ENCODE measurements at regions of chr6 and their contacts with region 1.

Region 1: GRCh38 chr6:38045701-38046305 is 226.3 kb downstream of the ZFAND3 start:
- DNase-seq: no peak
- ATAC-seq: no peak
- H3K4me3 ChIP-seq: no peak overlapping the region
- H3K4me3 Mint-ChIP-seq: no peak overlapping the region
- H3K27ac ChIP-seq: no peak overlapping the region
- H3K27ac Mint-ChIP-seq: no peak overlapping the region
- H3K4me1 ChIP-seq: no peaks in the 10 kb centered on the region
- H3K4me1 Mint-ChIP-seq: peaks cover 22 to 32% (median 27%) of the 10 kb centered on the region in 3 donors
- H3K27me3 ChIP-seq: no peaks in the 10 kb centered on the region
- H3K27me3 Mint-ChIP-seq: no peaks in the 10 kb centered on the region

Region 2: DNA sequence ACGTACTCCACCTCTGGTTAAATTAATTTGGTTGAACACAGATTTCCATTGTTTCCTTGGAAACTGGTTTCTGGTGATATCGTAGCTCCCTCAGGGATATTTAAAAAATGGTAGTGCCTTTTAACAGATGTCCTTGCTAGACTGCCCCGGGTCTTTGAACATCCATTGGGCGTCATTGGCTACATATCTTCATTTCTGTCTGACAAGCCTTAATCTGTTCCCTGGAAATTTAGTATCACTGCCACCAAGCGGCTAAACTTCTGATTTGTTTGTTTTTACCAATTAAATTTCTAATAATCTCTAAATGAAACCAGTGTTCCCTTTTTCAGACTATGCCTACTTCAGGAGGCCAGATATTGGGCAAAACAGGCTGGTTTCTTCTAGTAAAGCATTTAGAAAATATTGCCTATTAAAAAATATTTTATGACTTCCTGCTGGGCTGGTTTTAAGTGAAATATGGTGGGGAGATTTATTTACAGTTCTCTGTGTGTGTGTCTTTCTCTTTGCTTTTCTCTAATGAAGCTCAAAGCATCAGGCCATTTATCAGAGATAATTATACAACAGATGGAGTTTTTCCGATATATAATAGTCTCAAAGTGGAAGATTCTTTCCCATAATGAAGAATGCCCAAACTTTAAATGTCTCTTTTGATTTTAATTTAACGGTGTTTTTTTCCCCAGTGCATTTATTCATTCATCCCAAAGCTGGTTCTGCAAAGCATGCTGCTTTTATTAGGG is 23.2 kb after region 1 on chr6:
- CTCF ChIA-PET with region 1: interaction called in 1 of 2 experiments, 11 read pairs
- POLR2A ChIA-PET with region 1: no interaction called
- DNase-seq: no peak
- ATAC-seq: no peak
- H3K4me3 ChIP-seq: no peak overlapping the region
- H3K4me3 Mint-ChIP-seq: no peak overlapping the region
- H3K27ac ChIP-seq: no peak overlapping the region
- H3K27ac Mint-ChIP-seq: no peak overlapping the region
- H3K4me1 ChIP-seq: no peaks in the 10 kb centered on the region
- H3K4me1 Mint-ChIP-seq: peaks cover 28 to 41% (median 32%) of the 10 kb centered on the region in 3 donors
- H3K27me3 ChIP-seq: no peaks in the 10 kb centered on the region
- H3K27me3 Mint-ChIP-seq: no peaks in the 10 kb centered on the region

Region 3: GRCh38 chr6:38131527-38131965 is 85.7 kb after region 1 on chr6:
- CTCF ChIA-PET with region 1: no interaction called
- POLR2A ChIA-PET with region 1: no interaction called
- DNase-seq: no peak
- ATAC-seq: no peak
- H3K4me3 ChIP-seq: no peak overlapping the region
- H3K4me3 Mint-ChIP-seq: no peak overlapping the region
- H3K27ac ChIP-seq: no peak overlapping the region
- H3K27ac Mint-ChIP-seq: no peak overlapping the region
- H3K4me1 ChIP-seq: no peaks in the 10 kb centered on the region
- H3K4me1 Mint-ChIP-seq: peaks cover 45 to 53% (median 48%) of the 10 kb centered on the region in 3 donors
- H3K27me3 ChIP-seq: no peaks in the 10 kb centered on the region
- H3K27me3 Mint-ChIP-seq: no peaks in the 10 kb centered on the region

Measured in T-cell (primary cell).